ENCODE measurements at regions of chr3 and their contacts with region 1.

Region 1: GRCh38 chr3:123423026-123423425 is 25.9 kb downstream of the ADCY5 start:
- DNase-seq: no peak
- H3K4me3 ChIP-seq: no peak overlapping the region
- H3K4me3 Mint-ChIP-seq: no peak overlapping the region
- H3K27ac Mint-ChIP-seq: no peak overlapping the region
- H3K4me1 ChIP-seq: no peaks in the 10 kb centered on the region
- H3K4me1 Mint-ChIP-seq: no peaks in the 10 kb centered on the region
- H3K27me3 ChIP-seq: no peaks in the 10 kb centered on the region
- H3K27me3 Mint-ChIP-seq: no peaks in the 10 kb centered on the region
- CTCF ChIP-seq: no peak

Region 2: DNA sequence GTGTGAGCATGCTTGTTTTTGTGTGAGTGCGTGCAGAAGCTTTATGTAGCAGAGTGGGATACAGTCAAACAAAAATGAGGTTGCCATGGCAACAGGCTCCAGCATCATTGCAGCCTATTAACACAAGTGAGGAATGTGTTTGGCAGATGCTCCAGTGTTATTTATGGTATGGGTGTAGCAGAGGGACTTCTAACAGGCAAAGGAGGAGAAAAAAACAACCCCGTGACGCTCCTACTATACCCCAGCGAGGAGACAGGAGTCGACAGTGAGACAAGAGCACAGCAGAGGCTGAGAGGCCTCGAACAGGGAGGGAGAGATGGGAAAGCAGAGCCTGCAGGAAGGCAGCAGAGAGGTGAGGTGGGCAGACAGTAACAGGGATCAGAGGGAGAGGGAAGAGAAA is 21.0 kb after region 1 on chr3:
- CTCF ChIA-PET with region 1: interaction called, 10 read pairs
- POLR2A ChIA-PET with region 1: no interaction called
- intact Hi-C with region 1: no loop called
- DNase-seq: no peak
- H3K4me3 ChIP-seq: no peak overlapping the region
- H3K4me3 Mint-ChIP-seq: no peak overlapping the region
- H3K27ac Mint-ChIP-seq: no peak overlapping the region
- H3K4me1 ChIP-seq: peaks cover 7% of the 10 kb centered on the region
- H3K4me1 Mint-ChIP-seq: no peaks in the 10 kb centered on the region
- H3K27me3 ChIP-seq: no peaks in the 10 kb centered on the region; the same call in 1 of the 2 replicates
- H3K27me3 Mint-ChIP-seq: peaks cover 6% of the 10 kb centered on the region
- CTCF ChIP-seq: no peak